Activated B cell treated with CpG ODN at 0.5 μM for 24 hours (primary cell): ENCODE measurements at regions of chr2 and their contacts with region 1.

Region 1: DNA sequence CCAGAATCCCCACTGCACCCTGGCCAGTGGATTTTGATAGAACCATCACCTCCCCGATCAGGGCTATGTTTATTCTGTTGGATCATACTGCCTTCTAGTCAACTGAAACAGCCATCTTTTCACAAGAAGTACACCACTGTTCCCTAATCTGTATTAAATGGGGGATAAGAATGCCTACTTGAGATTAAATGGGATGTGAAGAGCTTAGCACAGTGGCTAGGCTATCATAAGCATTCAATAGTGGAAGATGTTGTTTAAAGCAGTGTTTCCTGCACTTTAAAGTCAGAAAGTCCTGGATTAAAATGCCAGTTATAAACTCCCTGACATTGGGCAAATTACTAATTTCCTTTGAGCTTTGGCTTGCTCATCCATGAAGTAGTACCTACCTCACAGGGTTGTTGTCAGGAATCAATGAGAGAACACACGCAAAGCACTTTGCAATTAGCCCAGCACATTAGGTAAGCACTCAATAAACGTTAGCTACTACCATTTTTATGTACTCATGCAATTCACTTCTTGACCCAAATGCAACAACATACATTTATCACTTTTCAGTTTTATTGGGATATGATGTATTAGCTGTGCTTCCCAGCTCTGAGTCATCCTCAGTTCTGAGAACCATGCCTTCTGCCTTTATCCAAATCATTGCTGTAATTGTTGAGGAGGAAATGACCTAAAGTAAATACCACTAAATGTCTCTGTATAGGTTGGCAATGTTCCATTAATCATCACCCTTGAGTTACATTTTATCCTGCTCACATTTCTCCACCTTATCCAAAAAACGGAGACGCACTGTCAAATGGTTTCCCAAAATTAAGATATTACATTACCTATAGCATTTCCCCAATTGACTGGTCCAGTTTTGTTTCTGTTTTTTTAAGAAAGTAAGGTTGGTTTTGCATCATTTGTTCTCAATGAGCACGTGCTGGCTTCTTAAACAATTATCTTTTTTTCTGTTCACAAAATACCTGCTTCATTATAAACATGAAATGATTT is 2.1 kb downstream of the TMEM247 start:
- DNase-seq: no peak
- ATAC-seq: no peak
- H3K4me3 Mint-ChIP-seq: no peak overlapping the region
- H3K27ac Mint-ChIP-seq: no peak overlapping the region
- H3K4me1 Mint-ChIP-seq: peaks cover 14% of the 10 kb centered on the region
- H3K27me3 Mint-ChIP-seq: peaks cover 8% of the 10 kb centered on the region
- CTCF ChIP-seq: no peak

Region 2: DNA sequence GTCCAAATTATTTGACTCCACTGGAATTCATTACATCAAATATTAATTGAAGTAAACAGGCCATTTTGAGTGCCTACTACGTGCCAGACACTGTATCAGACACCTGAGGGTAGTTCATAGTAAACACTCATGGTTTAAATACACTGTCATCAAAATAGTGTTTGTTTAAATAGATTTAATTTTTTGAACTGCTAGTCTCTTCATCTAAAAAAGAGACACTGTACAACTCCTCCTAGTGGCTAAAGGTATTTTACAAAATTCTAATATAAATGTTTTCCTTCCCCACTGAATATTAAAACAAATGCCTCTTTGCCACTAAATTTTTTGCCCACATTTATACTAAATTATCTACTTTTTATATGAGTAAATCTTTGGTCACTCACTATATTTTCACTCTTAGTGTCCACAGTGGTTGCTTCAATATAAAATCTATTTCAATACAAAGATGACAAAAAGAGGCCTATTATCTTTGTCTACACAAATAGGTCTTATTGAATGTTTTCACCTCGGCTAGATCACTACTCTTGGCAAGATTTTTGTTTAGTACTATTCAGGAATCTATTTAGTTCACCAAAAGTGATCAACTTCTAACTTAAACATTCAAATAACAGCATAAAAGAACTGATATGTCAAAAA is 120.0 kb after region 1 on chr2:
- CTCF ChIA-PET with region 1: no interaction called
- POLR2A ChIA-PET with region 1: no interaction called
- intact Hi-C with region 1: loop called (anchors 5 kb)
- DNase-seq: no peak
- ATAC-seq: peak; percentile 28
- H3K4me3 Mint-ChIP-seq: no peak overlapping the region
- H3K27ac Mint-ChIP-seq: no peak overlapping the region
- H3K4me1 Mint-ChIP-seq: peaks cover 5% of the 10 kb centered on the region
- H3K27me3 Mint-ChIP-seq: no peaks in the 10 kb centered on the region
- CTCF ChIP-seq: peak; percentile 71